HAP-1 (cell line): ENCODE measurements at regions of chr13 and their contacts with region 1.

Region 1: DNA sequence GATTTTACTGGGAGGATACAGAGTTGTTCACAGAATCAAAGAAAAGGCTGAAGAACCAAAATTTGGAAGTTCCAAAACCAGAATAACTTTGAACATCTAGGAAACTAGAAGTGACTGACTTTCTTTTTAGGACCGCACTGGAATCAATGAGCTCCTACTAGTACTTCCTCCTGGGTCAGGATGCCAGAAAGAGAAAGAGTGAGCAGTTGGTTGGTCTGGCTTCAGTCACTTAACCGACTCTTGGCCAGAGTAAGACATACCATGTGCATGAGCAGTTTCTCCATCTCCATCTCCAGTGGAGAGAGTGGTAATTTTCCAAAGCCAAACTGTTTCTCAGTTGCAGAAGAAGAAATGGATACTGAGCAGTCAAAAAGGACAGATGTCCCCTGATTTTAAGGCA is 27.1 kb upstream of the MTUS2 start:
- DNase-seq: no peak
- H3K4me3 ChIP-seq: no peak overlapping the region
- H3K4me1 ChIP-seq: 0 out of 2 replicates have a peak, but pooled peaks cover 3% of the 10 kb centered on the region
- H3K27me3 ChIP-seq: peaks cover 27% of the 10 kb centered on the region

Region 2: DNA sequence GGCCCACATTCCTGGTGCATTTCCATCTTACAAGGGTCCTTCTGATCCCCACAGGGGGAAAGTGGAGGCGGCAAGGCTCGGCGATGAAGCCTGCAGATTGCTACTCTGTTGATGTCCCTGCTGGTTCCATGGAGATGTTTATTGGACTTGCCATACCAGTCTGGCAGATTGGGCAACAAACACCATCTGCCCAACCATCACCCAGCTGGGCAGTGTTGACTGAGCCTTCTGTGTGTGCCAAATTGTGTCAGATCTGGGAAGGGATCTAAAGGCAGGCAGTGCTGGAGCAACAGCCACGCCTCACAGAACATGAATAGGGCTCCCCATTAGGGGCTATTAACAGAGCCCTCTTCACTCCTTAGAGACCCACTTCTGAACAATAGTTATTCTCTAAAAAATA is 333.1 kb before region 1 on chr13:
- in situ Hi-C with region 1: no loop called
- DNase-seq: no peak
- H3K4me3 ChIP-seq: no peak overlapping the region
- H3K4me1 ChIP-seq: peaks cover 12% of the 10 kb centered on the region
- H3K27me3 ChIP-seq: no peaks in the 10 kb centered on the region

Region 3: DNA sequence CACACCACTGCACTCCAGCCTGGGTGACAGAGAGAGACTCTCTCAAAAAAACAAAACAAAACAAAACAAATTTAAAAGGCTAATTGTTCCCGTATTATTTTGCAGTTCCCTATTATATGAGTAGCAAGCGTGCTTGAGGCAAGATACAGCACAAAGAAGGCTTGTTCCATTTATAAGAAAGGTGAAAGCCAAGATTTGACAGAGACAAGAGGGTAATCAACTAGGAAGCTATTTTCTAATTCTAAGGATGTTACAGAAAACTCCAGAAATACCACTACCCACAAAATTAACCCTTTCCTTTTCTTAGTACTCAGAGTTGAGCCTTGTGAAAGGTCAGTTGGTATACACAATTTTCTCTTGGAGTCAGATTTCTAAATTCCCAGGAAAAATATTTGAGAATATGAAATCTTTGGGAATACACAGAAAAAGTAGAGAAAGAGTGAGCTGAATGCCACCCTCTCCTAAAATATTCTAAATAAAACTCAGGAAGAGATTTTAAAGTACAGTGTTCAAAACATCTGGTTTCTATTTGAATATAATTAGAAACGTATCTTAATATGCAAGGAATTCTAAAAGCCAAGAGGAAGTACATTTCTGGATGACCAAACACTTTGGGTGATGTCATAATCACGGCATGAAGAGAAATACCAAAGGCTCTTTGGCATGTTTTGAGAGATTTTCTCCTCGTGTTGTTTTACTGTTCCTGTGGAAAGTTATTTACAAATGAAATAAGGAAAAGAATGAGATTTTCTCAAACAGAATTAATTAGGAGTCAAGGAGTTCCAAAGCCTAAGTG is 235.1 kb before region 1 on chr13:
- in situ Hi-C with region 1: no loop called
- DNase-seq: no peak
- H3K4me3 ChIP-seq: no peak overlapping the region
- H3K4me1 ChIP-seq: 0 out of 2 replicates have a peak, but pooled peaks cover 5% of the 10 kb centered on the region
- H3K27me3 ChIP-seq: no peaks in the 10 kb centered on the region

Region 4: DNA sequence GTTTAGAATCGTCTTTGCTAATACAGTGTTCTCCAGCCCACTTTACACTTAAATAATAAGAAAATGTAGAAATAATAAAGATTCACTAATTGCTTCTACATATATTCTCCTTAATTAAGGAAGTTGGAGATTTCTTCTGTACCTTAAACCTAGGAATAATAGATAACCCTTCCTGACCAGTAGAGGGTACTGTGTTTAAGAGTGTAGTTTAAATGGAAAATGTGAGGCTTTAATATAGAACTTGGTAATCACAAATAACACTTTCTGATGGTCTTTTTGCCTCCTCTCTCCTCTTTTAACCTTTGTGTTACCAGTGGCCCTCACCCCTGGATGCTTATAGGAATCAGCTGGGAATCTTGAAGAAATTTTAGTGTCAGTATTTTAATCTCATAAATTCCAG is 113.4 kb before region 1 on chr13:
- in situ Hi-C with region 1: loop called (anchors 10 kb)
- DNase-seq: peak in 1 of 2 experiments; percentile 49
- H3K4me3 ChIP-seq: no peak overlapping the region
- H3K4me1 ChIP-seq: no peaks in the 10 kb centered on the region; the same call in 1 of the 2 replicates
- H3K27me3 ChIP-seq: no peaks in the 10 kb centered on the region

Region 5: GRCh38 chr13:30078059-30078458 is 1285.1 kb after region 1 on chr13:
- in situ Hi-C with region 1: no loop called
- DNase-seq: no peak
- H3K4me3 ChIP-seq: no peak overlapping the region
- H3K4me1 ChIP-seq: no peaks in the 10 kb centered on the region
- H3K27me3 ChIP-seq: no peaks in the 10 kb centered on the region